Lower leg skin (tissue), 4 donors: ENCODE measurements at regions of chr19 and their contacts with region 1.

Region 1: GRCh38 chr19:40662921-40663694 is 27.3 kb downstream of the NUMBL start:
- DNase-seq: peak; percentile 84 to 99
- H3K4me3 ChIP-seq: peak overlapping the region; percentile 31
- CTCF ChIP-seq: no peak
- POLR2A ChIP-seq: no peak

Region 2: GRCh38 chr19:40735003-40735771 is 72.1 kb after region 1 on chr19:
- intact Hi-C with region 1: no loop called
- DNase-seq: no peak
- H3K4me3 ChIP-seq: no peak overlapping the region
- CTCF ChIP-seq: no peak
- POLR2A ChIP-seq: no peak

Region 3: GRCh38 chr19:40806488-40807468 is 143.7 kb after region 1 on chr19:
- intact Hi-C with region 1: loop called (anchors 5 kb)
- DNase-seq: peak; percentile 87 to 96
- H3K4me3 ChIP-seq: no peak overlapping the region
- CTCF ChIP-seq: peak in 1 of 3 donors; percentile 46
- POLR2A ChIP-seq: no peak

Region 4: GRCh38 chr19:40822161-40822560 is 159.1 kb after region 1 on chr19:
- intact Hi-C with region 1: loop called (anchors 5 kb)
- DNase-seq: peak in 1 of 2 donors; percentile 77
- H3K4me3 ChIP-seq: no peak overlapping the region
- CTCF ChIP-seq: no peak
- POLR2A ChIP-seq: no peak

Region 5: GRCh38 chr19:40974633-40975037 is 311.5 kb after region 1 on chr19:
- intact Hi-C with region 1: loop called (anchors 10 kb)
- DNase-seq: peak; percentile 61 to 89
- H3K4me3 ChIP-seq: no peak overlapping the region
- CTCF ChIP-seq: no peak
- POLR2A ChIP-seq: no peak

Region 6: DNA sequence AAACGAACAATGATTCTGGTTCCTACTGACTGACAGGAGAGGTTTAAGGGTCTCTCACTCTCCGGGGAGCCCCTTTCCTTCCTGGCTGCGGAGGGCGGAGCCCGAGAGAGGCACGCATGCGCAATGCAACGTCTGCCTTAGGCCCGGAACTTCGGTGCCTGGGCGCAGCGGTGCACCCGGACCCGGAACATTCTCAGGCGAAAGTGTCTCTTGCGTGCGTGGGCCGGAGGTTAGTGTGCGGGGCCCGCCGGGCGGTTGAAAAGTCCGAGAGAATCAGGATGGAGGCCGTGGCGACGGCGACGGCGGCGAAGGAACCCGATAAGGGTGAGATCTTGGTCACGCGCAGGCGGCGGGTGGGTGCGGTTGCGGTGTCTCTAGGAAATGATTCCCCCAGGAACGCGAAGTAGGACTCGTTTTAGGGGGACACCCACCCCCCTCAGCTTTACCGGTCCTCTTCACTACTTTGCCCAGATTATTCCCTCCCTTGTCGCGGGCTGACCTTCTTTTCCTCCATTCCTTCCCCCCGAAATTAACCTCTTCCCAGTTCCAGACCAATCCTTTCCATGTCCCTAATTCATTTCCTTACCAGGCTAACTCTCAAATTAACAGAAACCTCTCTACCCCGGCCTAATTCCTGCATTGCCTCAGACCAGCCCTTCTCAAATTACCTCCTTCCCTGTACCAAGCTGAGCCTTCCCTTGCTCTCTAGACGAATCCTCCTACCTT is 647.1 kb after region 1 on chr19 and contains the start of gene CCDC97:
- intact Hi-C with region 1: loop called (anchors 2 kb)
- DNase-seq: peak; percentile 78 to 97
- H3K4me3 ChIP-seq: peak within 1 kb of the TSS; percentile 50
- CTCF ChIP-seq: peak in 1 of 3 donors; percentile 4
- POLR2A ChIP-seq: peak in 1 of 2 donors; percentile 44
- total RNA-seq, gene CCDC97: 11.6 to 19.6 (median 13.7) TPM